ENCODE measurements at regions of chr7 and their contacts with region 1.

Region 1: DNA sequence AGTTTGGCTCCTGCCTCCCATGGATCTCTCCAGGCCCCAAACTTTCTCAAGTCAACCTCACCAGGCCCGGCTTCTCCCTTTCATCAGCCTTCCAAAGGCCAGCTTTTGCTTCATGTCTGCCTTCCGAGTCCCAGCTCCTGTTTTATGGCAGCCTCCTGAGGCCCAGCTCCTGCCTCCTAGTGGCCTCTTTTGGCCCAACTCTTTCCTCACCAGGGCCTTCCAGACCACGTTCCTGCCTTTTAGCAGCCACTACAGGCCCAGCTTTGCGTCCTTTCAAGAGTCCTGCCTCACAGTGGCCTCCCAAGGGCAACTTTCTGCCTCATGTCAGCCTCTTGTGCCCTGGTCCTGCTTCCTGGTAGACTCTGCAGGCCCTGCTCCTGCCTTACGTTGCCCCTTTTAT is 15.3 kb upstream of the TMEM248 start:
- DNase-seq: no peak
- H3K4me3 ChIP-seq: no peak overlapping the region
- H3K27ac ChIP-seq: no peak overlapping the region
- H3K4me1 ChIP-seq: no peaks in the 10 kb centered on the region
- H3K27me3 ChIP-seq: no peaks in the 10 kb centered on the region
- CTCF ChIP-seq: peak; percentile 35; the same call in 1 of the 2 replicates
- EP300 ChIP-seq: no peak
- RAD21 ChIP-seq: no peak

Region 2: GRCh38 chr7:66847879-66848790 is 57.6 kb before region 1 on chr7:
- CTCF ChIA-PET with region 1: no interaction called
- POLR2A ChIA-PET with region 1: no interaction called
- DNase-seq: no peak
- H3K4me3 ChIP-seq: no peak overlapping the region
- H3K27ac ChIP-seq: peak overlapping the region in 1 of 2 experiments; percentile 66; a peak in 2 of 4 replicates
- H3K4me1 ChIP-seq: peaks cover 0 to 7% of the 10 kb centered on the region in 2 experiments; a peak in 1 of 4 replicates
- H3K27me3 ChIP-seq: no peaks in the 10 kb centered on the region
- CTCF ChIP-seq: no peak
- EP300 ChIP-seq: no peak
- RAD21 ChIP-seq: no peak

Region 3: GRCh38 chr7:66894463-66895080 is 11.1 kb before region 1 on chr7:
- CTCF ChIA-PET with region 1: interaction called, 11 read pairs
- POLR2A ChIA-PET with region 1: interaction called, 4 read pairs
- DNase-seq: no peak
- H3K4me3 ChIP-seq: no peak overlapping the region
- H3K27ac ChIP-seq: no peak overlapping the region
- H3K4me1 ChIP-seq: no peaks in the 10 kb centered on the region
- H3K27me3 ChIP-seq: no peaks in the 10 kb centered on the region
- CTCF ChIP-seq: no peak
- EP300 ChIP-seq: no peak
- RAD21 ChIP-seq: 0 out of 2 replicates have a peak, but pooled peaks have one; percentile 29